ENCODE measurements at regions of chr13 and their contacts with region 1.

Region 1: DNA sequence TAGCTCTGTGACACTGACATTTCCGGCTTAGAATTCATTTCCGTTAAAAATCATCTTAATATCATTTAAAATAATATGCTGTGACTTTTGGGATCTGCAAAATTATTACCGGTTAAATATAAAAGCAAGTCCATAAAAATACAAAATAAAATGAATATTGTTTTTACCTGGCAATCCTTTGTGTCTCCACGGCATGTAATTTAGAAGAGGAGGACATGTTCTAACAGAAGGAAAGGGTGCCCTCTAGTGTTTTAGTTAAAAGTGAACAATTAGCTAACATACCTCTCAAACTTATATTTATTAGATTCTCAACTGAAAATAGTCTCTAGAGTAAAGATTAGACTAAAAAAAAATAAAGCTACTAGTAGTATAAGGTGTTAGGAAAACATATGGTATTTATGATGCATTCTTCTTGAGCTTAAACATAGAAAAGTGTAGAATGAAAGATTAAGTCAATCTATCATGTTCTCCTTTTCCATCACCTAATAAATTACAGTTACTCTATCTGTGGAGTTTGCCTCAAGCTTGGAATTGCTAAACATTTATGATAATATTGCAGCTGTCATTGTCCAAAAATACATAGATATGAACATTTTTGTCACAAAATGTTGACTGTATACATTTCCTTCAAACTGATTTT is 676.7 kb upstream of the SPRY2 start:
- DNase-seq: no peak
- H3K4me3 Mint-ChIP-seq: no peak overlapping the region
- H3K27ac Mint-ChIP-seq: no peak overlapping the region
- H3K4me1 Mint-ChIP-seq: no peaks in the 10 kb centered on the region
- H3K27me3 Mint-ChIP-seq: no peaks in the 10 kb centered on the region
- CTCF ChIP-seq: no peak

Region 2: GRCh38 chr13:80342471-80343380 is 674.9 kb before region 1 on chr13:
- CTCF ChIA-PET with region 1: no interaction called
- intact Hi-C with region 1: loop called (anchors 2 kb)
- DNase-seq: peak; percentile 73
- H3K4me3 Mint-ChIP-seq: no peak overlapping the region
- H3K27ac Mint-ChIP-seq: no peak overlapping the region
- H3K4me1 Mint-ChIP-seq: no peaks in the 10 kb centered on the region
- H3K27me3 Mint-ChIP-seq: no peaks in the 10 kb centered on the region
- CTCF ChIP-seq: peak; percentile 50

Measured in Calu3 (cell line).